CD4-positive, alpha-beta T cell (primary cell): ENCODE measurements at regions of chr9 and their contacts with region 1.

Region 1: DNA sequence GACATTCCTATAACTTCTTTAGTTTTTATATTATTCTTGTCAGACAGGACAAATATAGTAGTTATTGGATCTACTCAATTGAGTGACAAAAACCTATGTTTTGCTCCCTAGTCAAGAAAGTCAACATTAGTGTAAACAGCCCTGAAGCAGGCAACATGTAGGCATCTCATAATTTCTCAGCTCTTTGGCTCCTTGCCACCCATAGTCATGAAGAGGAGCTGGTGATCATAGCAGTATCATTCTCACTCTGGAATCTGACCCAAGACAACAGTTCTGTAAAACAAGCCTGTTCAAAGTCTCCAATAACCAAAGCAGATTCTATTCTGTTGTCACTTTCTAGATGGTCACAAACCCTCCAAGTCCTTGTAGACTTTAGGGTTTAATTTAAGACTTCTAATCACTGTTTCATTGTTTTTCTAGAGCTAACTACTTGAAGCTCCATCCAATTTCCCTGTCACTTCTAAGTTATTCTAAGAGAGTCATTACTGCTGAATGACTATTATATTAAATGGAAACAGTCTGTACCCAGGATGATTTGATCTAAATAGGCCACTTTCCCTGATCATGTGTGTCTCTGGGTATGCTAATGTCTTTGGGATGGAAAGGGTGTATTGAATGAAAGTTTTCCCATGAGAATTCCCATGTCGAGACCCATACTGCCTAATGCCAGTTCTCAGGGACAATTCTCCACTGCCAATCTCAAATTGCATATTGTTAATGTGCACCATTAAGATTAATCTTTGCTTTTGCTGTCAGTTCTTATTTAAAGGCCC is 533.3 kb downstream of the ACTL7B start:
- DNase-seq: no peak
- ATAC-seq: no peak
- H3K4me3 ChIP-seq: no peak overlapping the region
- H3K4me3 Mint-ChIP-seq: no peak overlapping the region
- H3K27ac ChIP-seq: no peak overlapping the region
- H3K27ac Mint-ChIP-seq: no peak overlapping the region
- H3K4me1 ChIP-seq: no peaks in the 10 kb centered on the region
- H3K4me1 Mint-ChIP-seq: no peaks in the 10 kb centered on the region
- H3K27me3 ChIP-seq: no peaks in the 10 kb centered on the region
- H3K27me3 Mint-ChIP-seq: no peaks in the 10 kb centered on the region
- CTCF ChIP-seq: no peak

Region 2: GRCh38 chr9:108207561-108208165 is 114.8 kb before region 1 on chr9:
- CTCF ChIA-PET with region 1: no interaction called
- POLR2A ChIA-PET with region 1: no interaction called
- intact Hi-C with region 1: no loop called
- DNase-seq: no peak
- ATAC-seq: no peak
- H3K4me3 ChIP-seq: no peak overlapping the region
- H3K4me3 Mint-ChIP-seq: no peak overlapping the region
- H3K27ac ChIP-seq: no peak overlapping the region
- H3K27ac Mint-ChIP-seq: no peak overlapping the region
- H3K4me1 ChIP-seq: no peaks in the 10 kb centered on the region
- H3K4me1 Mint-ChIP-seq: no peaks in the 10 kb centered on the region
- H3K27me3 ChIP-seq: no peaks in the 10 kb centered on the region
- H3K27me3 Mint-ChIP-seq: no peaks in the 10 kb centered on the region
- CTCF ChIP-seq: no peak

Region 3: GRCh38 chr9:108356806-108357205 is 34.3 kb after region 1 on chr9:
- CTCF ChIA-PET with region 1: no interaction called
- POLR2A ChIA-PET with region 1: no interaction called
- intact Hi-C with region 1: loop called in 1 of 2 experiments (anchors 5 kb)
- DNase-seq: no peak
- ATAC-seq: no peak
- H3K4me3 ChIP-seq: no peak overlapping the region
- H3K4me3 Mint-ChIP-seq: no peak overlapping the region
- H3K27ac ChIP-seq: no peak overlapping the region
- H3K27ac Mint-ChIP-seq: no peak overlapping the region
- H3K4me1 ChIP-seq: no peaks in the 10 kb centered on the region
- H3K4me1 Mint-ChIP-seq: no peaks in the 10 kb centered on the region
- H3K27me3 ChIP-seq: no peaks in the 10 kb centered on the region
- H3K27me3 Mint-ChIP-seq: no peaks in the 10 kb centered on the region
- CTCF ChIP-seq: no peak

Region 4: DNA sequence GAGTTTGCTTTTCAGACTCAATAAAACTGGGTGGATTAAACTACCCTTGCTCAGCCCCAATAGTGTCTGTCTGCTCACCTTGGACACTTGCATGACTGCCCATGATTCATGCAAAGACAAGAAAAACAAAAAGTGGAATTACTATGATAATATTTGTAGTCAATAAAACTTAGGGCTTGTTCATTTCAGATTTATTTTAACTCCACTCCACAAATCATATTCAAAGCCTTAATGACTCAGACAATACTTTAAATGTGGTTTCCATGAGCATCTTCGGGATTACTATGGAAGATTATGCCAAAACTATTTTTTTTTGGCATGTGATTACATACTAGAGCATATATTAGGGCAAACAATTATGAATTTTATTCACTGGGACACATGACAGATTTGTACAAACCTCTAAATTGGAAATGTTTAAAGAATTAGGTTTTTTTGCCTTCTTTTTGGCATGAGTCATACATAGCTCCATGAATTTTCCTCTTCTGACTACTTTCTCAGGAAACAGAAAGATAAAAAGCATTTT is 64.4 kb after region 1 on chr9:
- CTCF ChIA-PET with region 1: no interaction called
- POLR2A ChIA-PET with region 1: no interaction called
- intact Hi-C with region 1: no loop called
- DNase-seq: no peak
- ATAC-seq: no peak
- H3K4me3 ChIP-seq: no peak overlapping the region
- H3K4me3 Mint-ChIP-seq: no peak overlapping the region
- H3K27ac ChIP-seq: no peak overlapping the region
- H3K27ac Mint-ChIP-seq: no peak overlapping the region
- H3K4me1 ChIP-seq: no peaks in the 10 kb centered on the region
- H3K4me1 Mint-ChIP-seq: no peaks in the 10 kb centered on the region
- H3K27me3 ChIP-seq: no peaks in the 10 kb centered on the region
- H3K27me3 Mint-ChIP-seq: no peaks in the 10 kb centered on the region
- CTCF ChIP-seq: no peak

Region 5: DNA sequence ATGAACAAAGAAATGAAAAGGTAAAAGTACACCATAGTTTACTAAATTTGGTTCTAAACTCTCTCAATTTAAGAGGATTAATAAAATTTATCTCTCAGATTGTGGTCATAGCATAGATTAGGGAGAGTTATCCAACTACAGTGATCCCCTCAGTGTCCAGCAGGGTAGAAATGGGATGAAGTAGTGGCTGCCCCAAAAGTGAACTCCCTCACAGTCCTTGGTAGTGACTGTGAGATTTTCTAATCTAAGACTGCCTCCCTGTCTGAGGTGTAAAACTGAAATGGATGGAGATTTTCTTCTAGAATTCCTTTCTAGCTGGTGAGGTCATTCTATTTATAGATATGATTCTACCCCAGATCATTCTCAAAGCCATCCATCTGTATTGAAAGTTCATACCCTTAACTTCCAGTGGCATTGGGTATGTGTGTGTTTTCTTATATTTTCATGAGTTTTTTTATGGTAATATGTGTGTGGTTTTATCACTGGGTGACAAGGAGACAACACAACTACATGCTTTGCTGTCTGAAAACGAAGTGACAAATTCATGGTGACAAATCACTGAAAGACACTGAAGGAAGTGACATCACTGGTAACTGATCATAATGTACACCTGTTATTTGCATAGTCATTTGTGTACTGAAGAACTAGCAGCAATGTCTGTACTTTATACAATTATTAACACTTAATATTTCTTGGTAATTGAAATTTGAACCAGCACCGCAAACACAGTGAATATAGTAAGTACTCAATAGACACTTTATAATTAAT is 78.0 kb after region 1 on chr9:
- CTCF ChIA-PET with region 1: no interaction called
- POLR2A ChIA-PET with region 1: no interaction called
- intact Hi-C with region 1: no loop called
- DNase-seq: no peak
- ATAC-seq: no peak
- H3K4me3 ChIP-seq: no peak overlapping the region
- H3K4me3 Mint-ChIP-seq: no peak overlapping the region
- H3K27ac ChIP-seq: no peak overlapping the region
- H3K27ac Mint-ChIP-seq: no peak overlapping the region
- H3K4me1 ChIP-seq: no peaks in the 10 kb centered on the region
- H3K4me1 Mint-ChIP-seq: no peaks in the 10 kb centered on the region
- H3K27me3 ChIP-seq: no peaks in the 10 kb centered on the region
- H3K27me3 Mint-ChIP-seq: no peaks in the 10 kb centered on the region
- CTCF ChIP-seq: no peak

Region 6: DNA sequence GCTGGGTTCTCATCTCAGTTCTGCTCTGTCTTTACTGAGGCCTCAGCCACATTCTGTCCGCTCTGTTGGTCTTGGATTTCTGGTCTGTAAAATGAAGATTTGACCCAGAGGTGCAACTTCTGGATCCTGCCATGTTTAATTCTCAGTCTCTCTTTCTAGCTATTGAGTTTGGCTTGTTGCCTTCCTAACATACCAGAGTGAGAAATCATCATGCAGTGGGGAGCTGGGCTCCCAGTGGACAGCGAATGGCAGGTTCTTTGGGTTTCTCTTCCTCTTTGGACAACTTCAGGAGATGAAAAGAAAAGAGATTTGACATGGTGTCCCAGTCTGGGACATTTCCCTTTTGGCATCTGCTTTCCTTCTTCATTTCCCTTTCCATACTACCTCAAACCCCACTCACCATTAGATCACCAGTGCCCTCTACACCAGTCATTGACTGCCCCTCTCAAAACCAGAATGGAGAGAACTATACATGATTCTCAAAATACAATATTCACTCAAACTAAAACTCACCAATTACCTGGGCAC is 198.6 kb after region 1 on chr9:
- CTCF ChIA-PET with region 1: no interaction called
- POLR2A ChIA-PET with region 1: no interaction called
- intact Hi-C with region 1: no loop called
- DNase-seq: no peak
- ATAC-seq: no peak
- H3K4me3 ChIP-seq: no peak overlapping the region
- H3K4me3 Mint-ChIP-seq: no peak overlapping the region
- H3K27ac ChIP-seq: no peak overlapping the region
- H3K27ac Mint-ChIP-seq: no peak overlapping the region
- H3K4me1 ChIP-seq: no peaks in the 10 kb centered on the region
- H3K4me1 Mint-ChIP-seq: no peaks in the 10 kb centered on the region
- H3K27me3 ChIP-seq: no peaks in the 10 kb centered on the region
- H3K27me3 Mint-ChIP-seq: no peaks in the 10 kb centered on the region
- CTCF ChIP-seq: no peak